CD8-positive, alpha-beta T cell (primary cell): ENCODE measurements at regions of chr2 and their contacts with region 1.

Region 1: DNA sequence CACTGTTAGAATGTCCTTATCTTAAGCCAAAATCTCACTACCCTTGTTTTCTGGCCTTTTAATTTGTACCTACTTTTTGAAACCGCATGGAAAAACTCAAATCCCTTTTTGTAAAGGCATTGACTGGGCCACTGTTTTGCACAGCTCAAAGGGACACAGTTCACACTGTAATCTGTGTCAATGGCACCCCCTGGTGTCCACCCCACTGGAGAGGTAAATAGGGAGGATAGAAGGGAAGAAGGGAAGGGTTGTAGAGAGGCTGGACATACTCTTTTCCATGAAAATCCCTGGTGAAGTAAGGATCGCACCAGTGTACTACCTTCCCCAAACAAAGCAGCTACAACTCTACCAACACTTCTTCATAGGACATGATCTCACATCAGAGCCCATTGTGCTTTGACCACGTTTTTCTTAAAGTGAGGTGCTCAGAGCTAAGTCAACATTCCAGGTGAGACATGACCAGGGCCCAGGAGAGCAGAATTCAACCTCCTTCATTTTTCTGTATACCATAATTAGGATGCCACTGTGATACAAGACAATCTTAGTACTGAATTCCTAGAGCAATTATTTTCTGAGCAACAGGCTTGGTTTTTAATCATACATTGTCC is 92.4 kb upstream of the RMDN2 start:
- DNase-seq: peak; percentile 62 to 91 (median 84)
- ATAC-seq: peak; percentile 78
- H3K4me3 ChIP-seq: no peak overlapping the region
- H3K4me3 Mint-ChIP-seq: no peak overlapping the region
- H3K27ac ChIP-seq: no peak overlapping the region
- H3K27ac Mint-ChIP-seq: no peak overlapping the region
- H3K4me1 ChIP-seq: no peaks in the 10 kb centered on the region
- H3K4me1 Mint-ChIP-seq: peaks cover 5% of the 10 kb centered on the region
- H3K27me3 ChIP-seq: no peaks in the 10 kb centered on the region
- H3K27me3 Mint-ChIP-seq: no peaks in the 10 kb centered on the region
- CTCF ChIP-seq: peak; percentile 90

Region 2: GRCh38 chr2:37168217-37168981 is 664.3 kb before region 1 on chr2:
- CTCF ChIA-PET with region 1: interaction called, 5 read pairs
- POLR2A ChIA-PET with region 1: no interaction called
- intact Hi-C with region 1: loop called in 1 of 2 experiments (anchors 5 kb)
- DNase-seq: peak in 3 of 9 experiments; percentile 10 to 62 (median 51)
- ATAC-seq: peak; percentile 71
- H3K4me3 ChIP-seq: no peak overlapping the region
- H3K4me3 Mint-ChIP-seq: no peak overlapping the region
- H3K27ac ChIP-seq: no peak overlapping the region
- H3K27ac Mint-ChIP-seq: no peak overlapping the region
- H3K4me1 ChIP-seq: no peaks in the 10 kb centered on the region
- H3K4me1 Mint-ChIP-seq: no peaks in the 10 kb centered on the region
- H3K27me3 ChIP-seq: peaks cover 0 to 2% of the 10 kb centered on the region in 2 experiments
- H3K27me3 Mint-ChIP-seq: peaks cover 2% of the 10 kb centered on the region
- CTCF ChIP-seq: peak; percentile 79

Region 3: GRCh38 chr2:37402636-37403035 is 430.1 kb before region 1 on chr2:
- CTCF ChIA-PET with region 1: interaction called, 238 read pairs
- POLR2A ChIA-PET with region 1: no interaction called
- intact Hi-C with region 1: no loop called
- DNase-seq: no peak
- ATAC-seq: no peak
- H3K4me3 ChIP-seq: no peak overlapping the region
- H3K4me3 Mint-ChIP-seq: no peak overlapping the region
- H3K27ac ChIP-seq: no peak overlapping the region
- H3K27ac Mint-ChIP-seq: no peak overlapping the region
- H3K4me1 ChIP-seq: no peaks in the 10 kb centered on the region
- H3K4me1 Mint-ChIP-seq: no peaks in the 10 kb centered on the region
- H3K27me3 ChIP-seq: no peaks in the 10 kb centered on the region
- H3K27me3 Mint-ChIP-seq: no peaks in the 10 kb centered on the region
- CTCF ChIP-seq: no peak

Region 4: DNA sequence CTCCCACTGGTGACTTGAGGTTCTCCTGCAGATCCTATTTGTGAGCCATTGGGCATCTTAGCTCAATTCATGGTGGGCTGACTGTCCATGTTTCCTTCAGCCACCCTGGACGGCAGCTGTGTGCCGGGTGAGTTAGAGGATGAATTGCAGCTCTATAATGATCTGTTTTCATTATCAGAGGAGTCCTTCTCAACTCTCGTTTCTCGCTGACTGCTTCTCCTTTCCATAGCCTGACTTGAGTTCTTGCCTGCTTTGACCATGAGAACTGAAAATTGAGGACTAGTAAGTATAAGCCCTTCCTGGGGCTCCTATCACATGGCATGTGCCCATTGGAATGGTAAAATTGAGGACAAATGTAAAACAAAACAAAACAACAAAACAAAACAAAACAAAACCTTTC is 283.1 kb before region 1 on chr2:
- CTCF ChIA-PET with region 1: interaction called, 16 read pairs
- POLR2A ChIA-PET with region 1: no interaction called
- intact Hi-C with region 1: loop called (anchors 1 kb)
- DNase-seq: no peak
- ATAC-seq: no peak
- H3K4me3 ChIP-seq: no peak overlapping the region
- H3K4me3 Mint-ChIP-seq: no peak overlapping the region
- H3K27ac ChIP-seq: no peak overlapping the region
- H3K27ac Mint-ChIP-seq: no peak overlapping the region
- H3K4me1 ChIP-seq: no peaks in the 10 kb centered on the region
- H3K4me1 Mint-ChIP-seq: peaks cover 16% of the 10 kb centered on the region
- H3K27me3 ChIP-seq: no peaks in the 10 kb centered on the region
- H3K27me3 Mint-ChIP-seq: no peaks in the 10 kb centered on the region
- CTCF ChIP-seq: no peak

Region 5: GRCh38 chr2:37816686-37817085 is 16.0 kb before region 1 on chr2:
- CTCF ChIA-PET with region 1: no interaction called
- POLR2A ChIA-PET with region 1: no interaction called
- intact Hi-C with region 1: no loop called
- DNase-seq: no peak
- ATAC-seq: no peak
- H3K4me3 ChIP-seq: no peak overlapping the region
- H3K4me3 Mint-ChIP-seq: no peak overlapping the region
- H3K27ac ChIP-seq: no peak overlapping the region
- H3K27ac Mint-ChIP-seq: no peak overlapping the region
- H3K4me1 ChIP-seq: no peaks in the 10 kb centered on the region
- H3K4me1 Mint-ChIP-seq: no peaks in the 10 kb centered on the region
- H3K27me3 ChIP-seq: no peaks in the 10 kb centered on the region
- H3K27me3 Mint-ChIP-seq: no peaks in the 10 kb centered on the region
- CTCF ChIP-seq: no peak

Region 6: DNA sequence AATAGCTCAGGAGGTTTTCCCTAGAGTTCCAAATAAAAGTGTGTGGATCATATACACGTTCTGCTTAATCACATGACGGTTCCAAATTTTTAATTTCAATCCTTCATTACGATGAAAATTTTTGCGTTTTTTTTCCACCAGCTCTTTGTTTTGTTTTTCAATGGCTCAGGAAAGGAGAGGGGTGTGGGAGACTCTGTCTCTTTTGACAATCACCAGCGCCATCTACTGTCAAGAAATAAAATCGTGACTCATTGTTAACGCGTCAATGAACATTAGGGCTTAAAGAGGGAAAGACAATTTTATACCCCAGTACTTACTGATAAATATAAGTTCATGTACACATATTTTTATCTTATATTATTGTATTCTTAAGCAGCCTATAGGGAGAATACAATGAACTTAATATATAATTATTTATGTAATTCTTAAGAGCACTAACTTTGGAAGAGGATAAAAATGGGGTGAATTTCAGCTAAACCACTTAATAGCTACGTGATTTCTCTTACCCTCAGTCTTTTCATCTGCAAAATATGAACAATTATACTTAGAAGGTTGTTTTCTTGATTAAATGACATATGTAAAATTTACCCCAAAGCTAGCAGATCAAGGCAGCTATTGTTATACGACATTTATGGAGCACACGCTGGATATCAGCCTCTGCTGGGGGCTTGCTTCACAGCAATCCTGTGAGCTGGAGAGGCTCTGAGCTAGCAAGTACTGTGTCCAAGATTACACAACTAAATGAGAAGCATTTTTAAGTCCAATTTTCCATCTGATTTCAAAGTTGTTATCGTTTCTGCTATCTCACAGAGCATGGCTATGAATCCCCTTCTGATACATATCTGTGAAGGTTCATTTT is 45.0 kb after region 1 on chr2:
- CTCF ChIA-PET with region 1: interaction called, 38 read pairs
- POLR2A ChIA-PET with region 1: no interaction called
- intact Hi-C with region 1: loop called in 1 of 2 experiments (anchors 2 kb)
- DNase-seq: peak in 3 of 9 experiments; percentile 39 to 76 (median 67)
- ATAC-seq: peak; percentile 63
- H3K4me3 ChIP-seq: no peak overlapping the region
- H3K4me3 Mint-ChIP-seq: no peak overlapping the region
- H3K27ac ChIP-seq: no peak overlapping the region
- H3K27ac Mint-ChIP-seq: no peak overlapping the region
- H3K4me1 ChIP-seq: no peaks in the 10 kb centered on the region
- H3K4me1 Mint-ChIP-seq: peaks cover 2% of the 10 kb centered on the region
- H3K27me3 ChIP-seq: no peaks in the 10 kb centered on the region
- H3K27me3 Mint-ChIP-seq: peaks cover 21% of the 10 kb centered on the region
- CTCF ChIP-seq: peak; percentile 82